ENCODE measurements at regions of chr19 and their contacts with region 1.

Region 1: GRCh38 chr19:10695401-10696398 is 5.5 kb upstream of the QTRT1 start:
- DNase-seq: peak; percentile 94
- ATAC-seq: peak; percentile 96
- H3K4me3 Mint-ChIP-seq: peak overlapping the region; percentile 69
- H3K27ac Mint-ChIP-seq: no peak overlapping the region
- H3K4me1 Mint-ChIP-seq: peaks cover 17% of the 10 kb centered on the region
- H3K27me3 Mint-ChIP-seq: peaks cover 9% of the 10 kb centered on the region

Region 2: DNA sequence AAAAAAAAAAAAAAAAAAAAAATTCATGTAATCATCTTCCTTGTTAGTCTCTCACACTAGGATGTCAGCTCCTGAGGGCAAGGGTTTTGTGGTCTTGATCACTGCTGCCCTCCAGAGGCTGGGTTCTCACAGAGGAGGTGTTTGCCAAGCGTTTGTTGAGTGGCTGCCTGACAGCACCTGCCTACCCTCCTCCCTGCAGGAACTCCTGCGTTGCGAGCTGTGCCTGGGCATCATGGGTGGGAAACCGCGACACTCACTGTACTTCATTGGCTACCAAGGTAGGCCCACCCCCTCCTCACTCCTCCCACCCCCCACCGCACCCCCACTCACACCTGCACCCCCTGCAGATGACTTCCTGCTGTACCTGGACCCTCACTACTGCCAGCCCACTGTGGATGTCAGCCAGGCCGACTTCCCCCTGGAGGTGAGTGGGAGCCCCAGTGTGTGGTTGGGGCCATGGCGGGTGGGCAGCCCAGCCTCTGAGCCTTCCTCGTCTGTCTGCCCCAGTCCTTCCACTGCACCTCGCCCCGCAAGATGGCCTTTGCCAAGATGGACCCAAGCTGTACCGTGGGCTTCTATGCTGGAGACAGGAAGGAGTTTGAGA is 143.9 kb before region 1 on chr19:
- CTCF ChIA-PET with region 1: interaction called, 10 read pairs
- POLR2A ChIA-PET with region 1: no interaction called
- DNase-seq: peak; percentile 62
- ATAC-seq: no peak
- H3K4me3 Mint-ChIP-seq: peak overlapping the region; percentile 25
- H3K27ac Mint-ChIP-seq: peak overlapping the region; percentile 93
- H3K4me1 Mint-ChIP-seq: peaks cover 62% of the 10 kb centered on the region
- H3K27me3 Mint-ChIP-seq: no peaks in the 10 kb centered on the region

Region 3: DNA sequence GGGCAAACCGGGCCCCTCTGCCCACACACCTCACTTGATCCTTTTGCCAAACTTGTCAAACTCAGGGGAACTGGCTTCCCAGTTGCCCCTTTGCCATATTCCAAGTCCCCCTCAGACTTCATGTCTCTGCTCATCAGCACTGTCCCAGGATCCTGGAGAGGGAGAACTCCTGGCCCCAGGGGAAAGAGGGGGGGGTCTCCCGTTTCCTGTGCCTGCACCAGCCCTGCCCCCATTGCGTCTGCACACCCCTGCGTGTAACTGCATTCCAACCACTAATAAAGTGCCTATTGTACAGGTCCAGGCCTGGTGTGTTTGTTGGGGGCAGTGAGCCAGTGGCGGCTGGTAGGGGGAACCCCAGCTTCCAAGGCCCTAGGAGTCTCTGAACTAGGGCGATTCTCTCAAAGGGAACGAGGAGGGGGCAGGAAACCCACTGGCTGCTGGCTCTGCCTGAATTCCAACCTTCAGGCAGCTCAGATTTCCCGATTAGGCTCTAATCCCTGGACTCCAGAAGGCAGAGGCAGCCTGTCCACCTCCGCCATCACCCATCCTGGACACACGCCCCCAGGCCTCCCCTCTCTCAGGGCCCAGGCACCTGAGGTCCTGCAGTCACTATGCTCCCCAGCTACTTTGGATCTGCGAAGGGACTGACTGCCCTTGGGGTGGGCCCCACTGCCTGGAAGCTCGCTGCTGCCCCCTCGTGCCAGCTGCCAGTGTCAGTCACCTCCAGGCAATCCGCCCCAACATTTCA is 51.3 kb before region 1 on chr19:
- CTCF ChIA-PET with region 1: interaction called, 65 read pairs
- POLR2A ChIA-PET with region 1: interaction called, 3 read pairs
- DNase-seq: peak; percentile 90
- ATAC-seq: peak; percentile 90
- H3K4me3 Mint-ChIP-seq: no peak overlapping the region
- H3K27ac Mint-ChIP-seq: peak overlapping the region; percentile 89
- H3K4me1 Mint-ChIP-seq: peaks cover 37% of the 10 kb centered on the region
- H3K27me3 Mint-ChIP-seq: no peaks in the 10 kb centered on the region

Region 4: DNA sequence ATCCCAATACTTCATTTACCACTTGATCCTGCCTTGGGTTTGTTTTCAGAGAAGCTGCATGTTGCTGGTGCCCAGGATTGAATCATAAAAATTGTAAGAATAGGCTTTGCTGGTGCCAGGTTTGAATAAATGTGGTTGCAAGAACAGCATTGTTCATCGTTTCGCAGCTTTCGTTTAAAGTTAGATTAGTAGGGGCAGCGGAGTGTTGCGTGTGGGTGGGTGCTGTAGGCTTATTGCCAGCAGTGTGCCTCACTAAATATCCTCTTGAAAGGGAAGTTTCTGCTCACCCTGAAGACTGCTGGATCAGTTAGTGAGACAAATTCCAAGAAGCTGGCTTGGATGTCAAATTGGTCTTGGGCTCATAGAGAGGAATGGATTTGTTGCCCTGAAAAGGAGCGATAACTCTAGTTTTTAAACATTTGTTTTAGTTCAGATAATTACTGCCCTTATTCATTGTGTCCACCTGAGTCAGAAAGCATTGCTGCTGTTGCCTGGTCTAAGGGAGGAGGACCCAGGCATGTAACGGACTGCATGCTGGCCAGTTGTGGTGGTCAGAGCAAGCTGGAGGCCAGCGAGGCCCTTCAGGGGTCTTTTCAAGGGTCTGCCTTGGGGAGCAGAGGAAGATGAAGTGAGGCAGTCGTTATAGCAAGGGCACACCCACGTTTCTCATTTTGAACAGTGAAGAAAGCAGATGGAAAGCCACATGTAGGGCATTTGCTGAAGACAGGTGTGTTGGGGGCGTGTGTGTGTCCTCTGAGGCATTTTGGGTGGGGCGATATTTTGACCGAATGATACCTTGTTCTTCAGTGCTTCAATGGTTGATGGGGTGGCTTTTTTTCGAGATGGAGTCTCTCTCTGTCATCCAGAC is 33.1 kb before region 1 on chr19:
- CTCF ChIA-PET with region 1: interaction called, 14 read pairs
- POLR2A ChIA-PET with region 1: interaction called, 3 read pairs
- DNase-seq: no peak
- ATAC-seq: no peak
- H3K4me3 Mint-ChIP-seq: no peak overlapping the region
- H3K27ac Mint-ChIP-seq: peak overlapping the region; percentile 69
- H3K4me1 Mint-ChIP-seq: peaks cover 48% of the 10 kb centered on the region
- H3K27me3 Mint-ChIP-seq: no peaks in the 10 kb centered on the region